Activated T-helper 1 cell treated with anti-CD3 and anti-CD28 coated beads, Interleukin-12 subunit alpha, Interleukin-12 subunit beta, Interleukin-2, Interleukin-4 antibody, amounts not matched to agents 30 ng/mL and 10 ng/mL and 1 ng/mL, durations not matched to agents 14 hours and 24 hours and 36 hours (primary cell): ENCODE measurements at regions of chr7 and their contacts with region 1.

Region 1: GRCh38 chr7:111076205-111076604 is 14.7 kb upstream of the LRRN3 start:
- DNase-seq: no peak
- H3K4me3 Mint-ChIP-seq: peak overlapping the region; percentile 46
- H3K27ac Mint-ChIP-seq: peak overlapping the region; percentile 85
- H3K4me1 Mint-ChIP-seq: peaks cover 78% of the 10 kb centered on the region
- H3K27me3 Mint-ChIP-seq: no peaks in the 10 kb centered on the region

Region 2: DNA sequence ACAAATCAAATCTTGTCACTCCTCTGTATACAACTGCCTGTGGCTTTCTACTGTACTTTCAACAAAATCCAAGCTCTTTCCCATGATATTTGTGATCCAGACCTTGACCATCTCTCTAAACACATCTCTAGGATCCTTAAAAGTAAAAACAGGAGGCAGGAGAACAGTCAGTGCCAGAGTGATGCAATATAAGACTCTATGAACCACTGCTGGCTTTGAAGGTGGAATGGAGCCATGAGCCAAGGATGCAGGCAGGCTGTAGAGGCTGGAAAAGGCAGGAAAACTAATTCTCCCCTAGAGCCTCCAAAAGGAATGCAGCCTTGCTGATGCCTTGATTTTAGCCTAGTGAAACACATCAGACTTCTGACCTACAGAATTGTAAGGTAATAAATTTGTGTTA is 30.8 kb before region 1 on chr7:
- intact Hi-C with region 1: no loop called
- DNase-seq: no peak
- H3K4me3 Mint-ChIP-seq: no peak overlapping the region
- H3K27ac Mint-ChIP-seq: no peak overlapping the region
- H3K4me1 Mint-ChIP-seq: peaks cover 18% of the 10 kb centered on the region
- H3K27me3 Mint-ChIP-seq: no peaks in the 10 kb centered on the region

Region 3: DNA sequence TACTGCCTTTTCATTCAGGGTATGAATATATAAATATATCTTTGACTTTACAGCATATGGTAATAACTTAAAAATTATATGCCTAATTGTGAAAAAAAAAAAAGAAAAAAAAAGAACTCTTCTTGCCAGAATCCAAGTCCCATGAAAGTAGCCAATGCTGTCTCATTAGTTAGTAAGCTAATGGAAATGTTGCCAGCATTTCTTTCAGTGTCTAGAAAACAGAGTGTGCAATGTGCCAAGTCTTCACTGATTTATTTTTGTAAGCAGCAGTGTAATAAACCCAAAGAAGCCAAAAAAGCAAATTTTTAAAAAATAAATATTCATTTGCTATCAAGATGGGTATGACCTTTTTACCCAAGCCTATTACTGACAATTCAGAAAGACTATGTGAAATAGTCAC is 16.4 kb before region 1 on chr7:
- intact Hi-C with region 1: loop called (anchors 2 kb)
- DNase-seq: no peak
- H3K4me3 Mint-ChIP-seq: no peak overlapping the region
- H3K27ac Mint-ChIP-seq: no peak overlapping the region
- H3K4me1 Mint-ChIP-seq: peaks cover 19% of the 10 kb centered on the region
- H3K27me3 Mint-ChIP-seq: no peaks in the 10 kb centered on the region